ENCODE measurements at regions of chr20 and their contacts with region 1.

Region 1: DNA sequence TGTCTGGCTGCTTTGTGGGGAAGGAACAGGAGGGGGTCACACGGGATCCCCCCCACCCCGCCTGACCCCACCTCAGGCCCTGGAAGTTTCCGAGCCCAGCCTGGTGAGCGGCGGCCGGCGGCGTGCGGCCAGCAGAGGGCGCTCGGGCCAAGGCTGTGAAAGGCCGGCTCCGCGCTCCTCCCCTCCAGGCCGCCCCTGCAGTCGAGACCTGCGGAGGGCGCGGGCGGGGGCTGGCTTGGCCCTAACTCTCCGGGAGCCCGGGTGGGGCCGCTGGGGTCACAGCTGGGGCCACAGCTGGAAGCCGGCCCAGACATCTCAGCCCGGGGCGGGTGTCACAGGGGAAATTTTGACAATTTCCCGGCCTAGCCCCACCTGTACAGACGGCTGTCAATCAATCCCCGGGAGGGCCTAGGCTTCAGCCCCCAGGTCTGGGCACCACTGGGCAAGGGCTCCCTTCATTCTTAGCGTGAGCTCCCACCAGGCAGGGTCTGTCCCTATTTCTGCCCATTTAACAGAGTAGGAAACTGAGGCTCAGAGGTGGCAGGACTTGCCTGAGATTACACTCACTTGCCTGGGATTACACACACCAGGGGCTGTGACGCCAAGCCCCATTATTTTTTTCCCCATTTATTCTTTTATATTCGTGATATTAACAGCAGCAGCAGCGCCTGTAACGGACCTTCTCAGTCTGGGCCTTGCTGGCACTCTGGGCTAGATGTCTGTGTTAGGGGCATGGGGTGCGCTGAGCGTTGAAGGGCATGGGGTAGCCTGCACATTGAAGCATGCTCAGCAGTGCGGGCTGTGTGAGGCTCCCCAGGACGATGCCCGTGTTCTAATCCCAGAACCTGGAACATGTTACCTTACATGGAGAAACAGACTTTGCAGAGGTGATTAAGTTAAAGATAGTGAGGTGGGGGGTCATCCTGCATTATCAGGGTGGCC is 23.0 kb downstream of the ZBP1 start:
- DNase-seq: peak; percentile 80 to 87
- ATAC-seq: peak; percentile 88 to 95 (median 93)
- H3K4me3 ChIP-seq: no peak overlapping the region
- H3K4me3 Mint-ChIP-seq: no peak overlapping the region
- H3K27ac ChIP-seq: no peak overlapping the region
- H3K27ac Mint-ChIP-seq: no peak overlapping the region
- H3K4me1 ChIP-seq: peaks cover 12% of the 10 kb centered on the region
- H3K4me1 Mint-ChIP-seq: peaks cover 11 to 14% of the 10 kb centered on the region in 2 donors
- H3K27me3 ChIP-seq: no peaks in the 10 kb centered on the region
- H3K27me3 Mint-ChIP-seq: no peaks in the 10 kb centered on the region
- CTCF ChIP-seq: peak; percentile 98

Region 2: DNA sequence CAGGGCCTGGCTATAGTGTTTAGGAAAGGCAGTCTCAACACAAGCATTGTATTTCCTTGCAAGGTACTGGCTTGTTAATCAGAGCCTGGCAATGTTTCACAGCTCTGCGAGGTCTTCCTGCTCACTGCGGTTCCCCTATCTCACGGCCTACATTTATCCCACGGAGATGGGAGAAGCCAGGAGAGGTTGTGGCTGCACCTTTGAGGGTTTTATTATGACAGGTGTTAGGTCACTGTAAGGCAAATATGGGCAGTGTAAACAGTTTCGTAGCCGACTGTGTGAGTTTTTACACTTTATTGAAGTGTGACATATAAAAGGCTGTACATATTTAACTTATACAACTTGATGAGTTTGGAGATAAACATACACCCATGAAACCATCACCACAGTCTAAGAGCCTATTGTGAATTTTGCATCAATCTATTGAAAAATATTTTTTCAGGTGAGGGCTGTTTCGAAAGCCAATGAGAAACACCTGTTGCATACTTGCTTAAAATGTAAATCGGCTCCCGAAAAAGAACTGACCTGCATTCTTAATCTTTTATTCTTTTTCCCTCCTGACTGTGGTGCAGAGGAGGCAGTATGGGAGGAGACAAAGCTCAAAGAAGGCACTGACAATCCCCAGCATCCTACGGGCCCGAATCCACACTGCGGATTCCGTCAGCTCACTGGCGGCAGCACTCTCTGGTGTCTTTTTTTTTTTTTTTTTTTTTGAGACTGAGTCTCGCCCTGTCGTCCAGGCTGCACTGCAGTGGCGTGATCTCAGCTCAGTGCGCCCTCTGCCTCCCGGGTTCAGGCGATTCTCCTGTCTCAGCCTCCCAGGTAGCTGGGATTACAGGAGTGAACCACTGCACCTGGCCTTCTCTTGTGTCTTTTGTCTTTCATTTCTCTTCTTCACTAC is 213.6 kb before region 1 on chr20:
- intact Hi-C with region 1: loop called (anchors 2 kb)
- DNase-seq: no peak
- ATAC-seq: peak; percentile 40 to 59 (median 56)
- H3K4me3 ChIP-seq: no peak overlapping the region
- H3K4me3 Mint-ChIP-seq: peak overlapping the region; percentile 58
- H3K27ac ChIP-seq: peak overlapping the region; percentile 4
- H3K27ac Mint-ChIP-seq: peak overlapping the region; percentile 84 to 87
- H3K4me1 ChIP-seq: peaks cover 34% of the 10 kb centered on the region
- H3K4me1 Mint-ChIP-seq: peaks cover 40 to 47% of the 10 kb centered on the region in 2 donors
- H3K27me3 ChIP-seq: no peaks in the 10 kb centered on the region
- H3K27me3 Mint-ChIP-seq: no peaks in the 10 kb centered on the region
- CTCF ChIP-seq: no peak

Region 3: GRCh38 chr20:57514273-57514751 is 83.0 kb before region 1 on chr20:
- intact Hi-C with region 1: loop called (anchors 1 kb)
- DNase-seq: peak in 1 of 2 donors; percentile 61
- ATAC-seq: peak in 1 of 3 donors; percentile 52
- H3K4me3 ChIP-seq: no peak overlapping the region
- H3K4me3 Mint-ChIP-seq: no peak overlapping the region
- H3K27ac ChIP-seq: no peak overlapping the region
- H3K27ac Mint-ChIP-seq: no peak overlapping the region
- H3K4me1 ChIP-seq: no peaks in the 10 kb centered on the region
- H3K4me1 Mint-ChIP-seq: no peaks in the 10 kb centered on the region
- H3K27me3 ChIP-seq: no peaks in the 10 kb centered on the region
- H3K27me3 Mint-ChIP-seq: peaks cover 11% of the 10 kb centered on the region in 2 donors
- CTCF ChIP-seq: peak; percentile 36

Region 4: GRCh38 chr20:57709931-57710799 is 112.9 kb after region 1 on chr20 and contains the start of gene PMEPA1:
- intact Hi-C with region 1: no loop called
- DNase-seq: peak; percentile 86 to 97
- ATAC-seq: peak; percentile 89 to 94 (median 91)
- H3K4me3 ChIP-seq: peak within 1 kb of the TSS; percentile 41
- H3K4me3 Mint-ChIP-seq: peak within 1 kb of the TSS; percentile 95
- H3K27ac ChIP-seq: peak within 1 kb of the TSS; percentile 45
- H3K27ac Mint-ChIP-seq: peak within 1 kb of the TSS; percentile 83 to 89
- H3K4me1 ChIP-seq: peaks cover 15% of the 10 kb centered on the region
- H3K4me1 Mint-ChIP-seq: peaks cover 6 to 15% of the 10 kb centered on the region in 2 donors
- H3K27me3 ChIP-seq: peaks cover 10% of the 10 kb centered on the region
- H3K27me3 Mint-ChIP-seq: peaks cover 29 to 42% of the 10 kb centered on the region in 2 donors
- CTCF ChIP-seq: no peak
- total RNA-seq, gene PMEPA1: 1.2 to 5.9 (median 2.4) TPM

Region 5: DNA sequence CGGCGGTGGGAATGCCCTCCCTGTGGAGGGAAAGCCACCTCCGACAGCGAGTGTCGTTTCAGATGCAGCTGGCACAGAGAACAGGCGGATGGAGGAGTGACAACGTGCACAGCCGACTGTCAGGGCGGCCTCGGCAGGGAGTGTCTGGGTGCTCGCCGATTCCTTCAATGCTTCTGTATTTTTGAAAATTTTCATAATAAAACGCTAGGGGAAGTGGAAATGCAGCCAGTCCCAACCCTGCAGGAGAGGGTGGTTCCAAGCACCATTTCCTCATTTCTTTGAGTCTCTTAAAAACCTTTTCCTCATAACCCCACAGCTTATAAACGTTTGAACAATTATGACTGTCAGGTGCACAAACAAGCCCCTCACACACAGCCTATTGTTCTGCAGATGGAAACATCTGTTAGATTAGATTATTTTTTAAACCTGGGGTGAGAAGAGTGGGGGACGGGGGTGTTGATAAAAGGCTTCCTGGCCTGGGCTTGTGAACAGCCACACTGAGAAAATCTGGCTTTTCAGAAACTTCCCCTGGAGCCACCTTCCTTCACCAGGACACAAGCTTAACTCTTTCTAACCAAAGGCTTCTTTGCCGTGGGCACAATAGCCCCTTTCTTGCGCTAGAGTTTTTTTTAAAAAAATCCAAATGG is 402.3 kb after region 1 on chr20:
- intact Hi-C with region 1: no loop called
- DNase-seq: no peak
- ATAC-seq: no peak
- H3K4me3 ChIP-seq: no peak overlapping the region
- H3K4me3 Mint-ChIP-seq: no peak overlapping the region
- H3K27ac ChIP-seq: no peak overlapping the region
- H3K27ac Mint-ChIP-seq: no peak overlapping the region
- H3K4me1 ChIP-seq: peaks cover 10% of the 10 kb centered on the region
- H3K4me1 Mint-ChIP-seq: no peaks in the 10 kb centered on the region
- H3K27me3 ChIP-seq: no peaks in the 10 kb centered on the region
- H3K27me3 Mint-ChIP-seq: peaks cover 11 to 13% of the 10 kb centered on the region in 2 donors
- CTCF ChIP-seq: no peak

Region 6: DNA sequence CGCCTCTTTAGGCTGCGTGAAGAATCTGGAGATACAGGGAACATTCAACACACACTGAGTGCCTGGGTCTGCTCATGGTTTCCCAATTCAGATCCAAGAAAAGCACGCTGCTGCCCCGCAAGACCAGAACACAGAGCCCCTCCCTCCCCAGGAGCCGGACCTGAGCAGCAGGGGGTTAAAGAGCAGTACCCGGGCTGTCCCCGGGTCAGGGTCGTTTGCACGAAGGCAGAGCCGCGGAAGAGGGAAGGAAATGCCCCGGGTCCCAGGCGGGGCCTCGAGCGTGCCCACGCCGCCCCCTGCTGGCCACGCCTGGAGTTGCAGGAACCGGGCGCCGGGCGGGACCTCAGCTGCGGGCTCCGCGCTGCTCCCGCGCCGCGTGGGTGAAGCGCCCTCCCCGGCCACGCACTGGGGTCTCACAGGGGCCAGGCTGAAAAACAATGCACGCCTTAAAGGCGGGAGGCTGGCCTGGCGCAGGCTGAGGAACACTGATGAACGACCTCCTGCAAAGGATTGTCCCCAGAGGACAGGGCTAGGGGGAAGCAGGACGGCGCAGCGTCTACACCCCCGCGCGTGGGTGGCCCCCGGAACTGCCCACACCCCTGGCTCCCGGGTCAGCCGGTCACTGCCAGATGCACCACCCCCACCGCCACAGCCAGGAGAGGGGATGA is 582.3 kb after region 1 on chr20:
- intact Hi-C with region 1: loop called (anchors 2 kb)
- DNase-seq: peak; percentile 71 to 78
- ATAC-seq: peak; percentile 86 to 97 (median 96)
- H3K4me3 ChIP-seq: no peak overlapping the region
- H3K4me3 Mint-ChIP-seq: peak overlapping the region; percentile 45
- H3K27ac ChIP-seq: no peak overlapping the region
- H3K27ac Mint-ChIP-seq: no peak overlapping the region
- H3K4me1 ChIP-seq: peaks cover 10% of the 10 kb centered on the region
- H3K4me1 Mint-ChIP-seq: peaks cover 1 to 9% of the 10 kb centered on the region in 2 donors
- H3K27me3 ChIP-seq: no peaks in the 10 kb centered on the region
- H3K27me3 Mint-ChIP-seq: peaks cover 17 to 31% of the 10 kb centered on the region in 2 donors
- CTCF ChIP-seq: peak; percentile 99

Region 7: GRCh38 chr20:58650776-58651558 is 1053.7 kb after region 1 on chr20 and contains the start of gene STX16:
- intact Hi-C with region 1: loop called (anchors 10 kb)
- DNase-seq: peak; percentile 78 to 95
- ATAC-seq: peak; percentile 68 to 84 (median 79)
- H3K4me3 ChIP-seq: peak within 1 kb of the TSS; percentile 91
- H3K4me3 Mint-ChIP-seq: peak within 1 kb of the TSS; percentile 97
- H3K27ac ChIP-seq: peak within 1 kb of the TSS; percentile 81
- H3K27ac Mint-ChIP-seq: peak within 1 kb of the TSS; percentile 94 to 98
- H3K4me1 ChIP-seq: peaks cover 14% of the 10 kb centered on the region
- H3K4me1 Mint-ChIP-seq: peaks cover 33 to 36% of the 10 kb centered on the region in 2 donors
- H3K27me3 ChIP-seq: no peaks in the 10 kb centered on the region
- H3K27me3 Mint-ChIP-seq: no peaks in the 10 kb centered on the region
- CTCF ChIP-seq: peak; percentile 62
- total RNA-seq, gene STX16: 136 to 146 (median 143) TPM